HEK293 (cell line): ENCODE measurements at regions of chr14 and their contacts with region 1.

Region 1: GRCh38 chr14:37594238-37594914 is 673 bp downstream of the FOXA1 start:
- H3K4me3 ChIP-seq: peak overlapping the region; percentile 75
- H3K27ac ChIP-seq: peak overlapping the region; percentile 99
- H3K4me1 ChIP-seq: peaks cover 3% of the 10 kb centered on the region; the same call in 1 of the 2 replicates
- CTCF ChIP-seq: peak; percentile 55; the same call in 1 of the 2 replicates

Region 2: GRCh38 chr14:37246427-37246914 is 347.9 kb before region 1 on chr14:
- CTCF ChIA-PET with region 1: interaction called, 15 read pairs
- POLR2A ChIA-PET with region 1: no interaction called
- H3K4me3 ChIP-seq: no peak overlapping the region
- H3K27ac ChIP-seq: no peak overlapping the region
- H3K4me1 ChIP-seq: no peaks in the 10 kb centered on the region
- CTCF ChIP-seq: 0 out of 2 replicates have a peak, but pooled peaks have one; percentile 12

Region 3: DNA sequence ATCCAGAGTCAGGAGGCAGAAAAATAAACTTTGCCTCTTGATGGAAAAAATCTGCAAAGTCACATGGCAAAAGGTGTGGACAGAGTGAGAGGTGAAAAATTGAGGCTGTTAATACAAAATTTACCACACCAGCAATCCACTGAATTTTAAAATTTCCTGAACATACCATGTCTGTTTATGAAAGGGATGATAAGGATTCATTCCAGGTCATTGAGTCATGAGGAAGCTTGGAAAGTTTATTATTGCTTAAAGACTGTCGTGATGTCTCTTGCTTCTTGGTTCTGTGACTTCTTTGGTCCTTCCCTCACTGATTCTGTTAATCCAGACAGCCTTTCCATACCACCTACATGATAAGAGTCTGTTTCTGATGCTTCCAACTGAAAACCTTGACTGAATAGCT is 74.3 kb after region 1 on chr14:
- CTCF ChIA-PET with region 1: no interaction called
- POLR2A ChIA-PET with region 1: no interaction called
- H3K4me3 ChIP-seq: no peak overlapping the region
- H3K27ac ChIP-seq: no peak overlapping the region
- H3K4me1 ChIP-seq: no peaks in the 10 kb centered on the region
- CTCF ChIP-seq: no peak